ENCODE measurements at regions of chr3 and their contacts with region 1.

Region 1: DNA sequence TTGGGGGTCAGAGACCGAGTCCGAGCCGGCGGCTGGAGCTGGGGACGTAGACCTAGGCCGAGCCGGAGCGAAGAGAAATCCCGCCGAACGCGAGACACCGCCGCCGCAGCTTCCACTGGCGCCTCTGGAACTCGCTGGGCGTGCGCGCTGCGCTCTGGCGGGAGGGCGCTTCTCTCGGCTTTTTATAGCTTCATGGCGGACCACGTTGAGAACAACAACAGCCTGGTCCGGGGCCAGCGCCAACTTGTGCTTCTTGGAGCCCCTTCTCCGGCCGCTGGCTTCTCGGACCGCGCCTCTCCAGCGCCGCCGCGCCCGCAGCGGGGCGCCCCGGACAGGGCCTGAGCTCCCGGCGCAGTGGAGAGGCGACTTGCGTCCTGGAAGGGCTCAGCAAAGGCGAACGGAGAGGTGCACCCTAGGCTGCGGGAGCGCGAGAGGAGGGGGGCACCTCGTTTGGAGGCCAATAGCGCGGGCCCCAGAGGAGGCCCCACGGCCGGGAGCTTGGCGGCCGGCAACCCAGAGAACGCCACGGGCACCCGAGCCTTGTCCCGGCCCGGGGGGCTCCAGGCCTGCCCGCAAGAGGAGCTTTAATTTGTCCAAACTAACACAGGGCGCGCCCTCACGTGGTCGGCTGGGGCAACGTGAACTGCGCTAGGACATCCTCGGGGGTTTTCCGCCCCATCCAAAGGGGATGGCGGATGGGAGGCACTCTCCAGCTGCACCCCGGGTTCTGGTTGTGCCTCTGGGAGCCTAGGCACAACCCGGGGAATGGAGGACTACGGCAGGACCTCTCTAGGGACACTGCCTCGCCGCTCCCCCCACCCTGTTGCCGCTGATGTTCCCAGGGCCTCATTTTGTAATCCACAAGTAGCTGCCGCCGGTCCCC is 37.7 kb downstream of the HMCES start:
- DNase-seq: peak; percentile 82
- ATAC-seq: peak; percentile 45
- H3K4me3 Mint-ChIP-seq: peak overlapping the region; percentile 65
- H3K27ac Mint-ChIP-seq: no peak overlapping the region
- H3K4me1 Mint-ChIP-seq: peaks cover 7% of the 10 kb centered on the region
- H3K27me3 Mint-ChIP-seq: no peaks in the 10 kb centered on the region; the same call in 1 of the 2 replicates
- CTCF ChIP-seq: peak; percentile 13; the same call in 1 of the 2 replicates

Region 2: DNA sequence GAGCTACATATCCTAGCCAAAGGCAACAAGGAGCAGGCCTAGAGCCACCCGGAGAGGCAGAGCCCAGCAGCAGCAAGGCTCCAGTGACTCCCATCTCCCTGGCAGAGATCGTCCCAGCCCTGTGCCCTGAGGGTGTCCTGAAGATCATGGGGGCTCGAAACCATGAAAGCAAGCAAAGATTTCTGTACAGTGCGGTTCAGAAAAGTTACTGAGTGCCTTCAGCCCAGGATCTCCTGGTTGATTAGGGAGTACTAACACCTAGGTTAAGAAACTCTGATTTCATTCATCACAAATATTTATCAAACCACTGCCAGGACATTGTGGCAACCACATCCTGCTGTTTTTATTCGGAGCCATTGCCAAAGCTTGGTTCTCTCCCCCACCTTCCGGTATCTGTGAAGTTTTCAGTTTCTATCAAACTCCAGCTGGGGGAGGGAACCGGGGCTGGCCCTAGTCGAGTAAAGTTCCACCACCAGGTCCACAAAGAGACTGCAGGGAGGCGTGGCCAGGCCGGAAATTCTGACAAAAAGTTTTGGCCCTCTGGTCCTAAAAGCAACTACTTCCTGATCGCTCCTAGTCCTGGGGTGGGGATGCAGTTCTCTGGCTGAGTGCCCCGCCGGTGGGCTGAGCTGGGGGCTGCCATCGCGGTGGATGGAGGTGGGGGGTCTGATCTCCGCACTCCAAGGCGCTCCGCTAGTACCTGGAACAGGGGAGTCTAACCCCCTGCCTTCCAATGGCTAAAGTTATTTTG is 195.9 kb before region 1 on chr3:
- CTCF ChIA-PET with region 1: interaction called, 6 read pairs
- POLR2A ChIA-PET with region 1: interaction called, 11 read pairs
- DNase-seq: peak; percentile 85
- ATAC-seq: peak; percentile 3
- H3K4me3 Mint-ChIP-seq: peak overlapping the region; percentile 83
- H3K27ac Mint-ChIP-seq: peak overlapping the region; percentile 99
- H3K4me1 Mint-ChIP-seq: peaks cover 56% of the 10 kb centered on the region
- H3K27me3 Mint-ChIP-seq: peaks cover 4% of the 10 kb centered on the region; the same call in 1 of the 2 replicates
- CTCF ChIP-seq: no peak

Region 3: GRCh38 chr3:129278439-129278970 is 37.9 kb before region 1 on chr3 and contains the start of gene HMCES:
- CTCF ChIA-PET with region 1: interaction called, 32 read pairs
- POLR2A ChIA-PET with region 1: interaction called, 44 read pairs
- DNase-seq: peak; percentile 94
- ATAC-seq: peak; percentile 89
- H3K4me3 Mint-ChIP-seq: peak within 1 kb of the TSS; percentile 98
- H3K27ac Mint-ChIP-seq: peak within 1 kb of the TSS; percentile 100
- H3K4me1 Mint-ChIP-seq: peaks cover 26% of the 10 kb centered on the region
- H3K27me3 Mint-ChIP-seq: no peaks in the 10 kb centered on the region; the same call in 1 of the 2 replicates
- CTCF ChIP-seq: no peak
- total RNA-seq, gene HMCES: 44.0 to 49.5 TPM (median 47.7 TPM) in 3 replicates

Region 4: DNA sequence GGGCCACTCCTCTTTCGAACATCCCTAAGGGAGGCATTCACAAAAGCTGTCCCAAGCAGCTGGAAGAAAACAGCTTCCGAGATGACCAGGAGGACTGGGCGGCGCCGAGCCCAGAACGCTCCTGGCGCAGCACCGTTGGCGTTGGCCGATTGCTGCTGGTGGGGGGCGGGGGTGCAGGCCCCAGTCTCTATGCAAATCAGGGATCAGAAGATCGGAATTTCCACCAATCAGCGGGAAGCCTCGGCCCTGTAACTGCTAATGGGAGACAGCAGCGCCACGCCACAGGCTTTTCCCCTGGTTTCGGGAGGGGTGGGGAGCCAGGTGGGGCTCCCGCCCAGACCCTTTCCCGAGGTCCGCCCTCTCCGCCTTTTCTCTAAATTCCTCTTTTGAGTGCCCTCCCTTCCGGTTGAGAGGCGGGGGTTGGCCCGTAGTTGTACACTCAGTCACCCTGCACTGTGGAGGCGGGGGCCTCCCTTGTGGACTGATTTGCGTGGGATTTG is 10.7 kb before region 1 on chr3:
- CTCF ChIA-PET with region 1: interaction called, 14 read pairs
- POLR2A ChIA-PET with region 1: interaction called, 21 read pairs
- DNase-seq: peak; percentile 99
- ATAC-seq: peak; percentile 96
- H3K4me3 Mint-ChIP-seq: peak overlapping the region; percentile 65
- H3K27ac Mint-ChIP-seq: peak overlapping the region; percentile 100
- H3K4me1 Mint-ChIP-seq: peaks cover 25% of the 10 kb centered on the region
- H3K27me3 Mint-ChIP-seq: no peaks in the 10 kb centered on the region
- CTCF ChIP-seq: no peak

Region 5: GRCh38 chr3:129330409-129330808 is 14.0 kb after region 1 on chr3:
- CTCF ChIA-PET with region 1: interaction called, 11 read pairs
- POLR2A ChIA-PET with region 1: interaction called, 12 read pairs
- DNase-seq: no peak
- ATAC-seq: no peak
- H3K4me3 Mint-ChIP-seq: no peak overlapping the region
- H3K27ac Mint-ChIP-seq: no peak overlapping the region
- H3K4me1 Mint-ChIP-seq: no peaks in the 10 kb centered on the region
- H3K27me3 Mint-ChIP-seq: peaks cover 12% of the 10 kb centered on the region
- CTCF ChIP-seq: no peak

Region 6: GRCh38 chr3:129428376-129429079 is 112.2 kb after region 1 on chr3 and contains the start of gene EFCAB12:
- CTCF ChIA-PET with region 1: no interaction called
- POLR2A ChIA-PET with region 1: no interaction called
- DNase-seq: peak; percentile 97
- ATAC-seq: peak; percentile 86
- H3K4me3 Mint-ChIP-seq: peak within 1 kb of the TSS; percentile 78
- H3K27ac Mint-ChIP-seq: peak within 1 kb of the TSS; percentile 91
- H3K4me1 Mint-ChIP-seq: peaks cover 47% of the 10 kb centered on the region
- H3K27me3 Mint-ChIP-seq: peaks cover 18% of the 10 kb centered on the region
- CTCF ChIP-seq: no peak
- total RNA-seq, gene EFCAB12: 0.16 to 0.34 TPM (median 0.20 TPM) in 3 replicates

Measured in WTC11 (cell line).